ENCODE measurements at regions of chr5 and their contacts with region 1.

Region 1: DNA sequence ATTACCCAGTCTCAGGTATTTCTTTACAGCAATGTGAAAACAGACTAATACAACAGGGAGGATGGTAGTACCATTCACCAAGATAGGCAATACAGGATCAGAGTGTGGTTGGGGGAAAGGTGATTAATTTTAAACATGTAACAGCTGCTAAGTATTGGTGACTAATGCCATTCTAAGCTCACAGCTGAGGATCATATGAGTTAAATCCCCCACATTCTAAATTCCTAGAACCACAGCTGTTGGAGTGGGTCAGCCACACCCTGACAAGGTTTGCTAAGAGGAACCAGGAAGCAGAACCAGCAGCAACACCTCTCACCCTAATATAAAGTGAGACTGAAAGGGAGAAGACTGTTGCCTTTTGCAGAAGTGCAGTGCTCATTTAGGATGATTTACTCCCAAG is 24.8 kb downstream of the HSPB3 start:
- DNase-seq: no peak

Region 2: DNA sequence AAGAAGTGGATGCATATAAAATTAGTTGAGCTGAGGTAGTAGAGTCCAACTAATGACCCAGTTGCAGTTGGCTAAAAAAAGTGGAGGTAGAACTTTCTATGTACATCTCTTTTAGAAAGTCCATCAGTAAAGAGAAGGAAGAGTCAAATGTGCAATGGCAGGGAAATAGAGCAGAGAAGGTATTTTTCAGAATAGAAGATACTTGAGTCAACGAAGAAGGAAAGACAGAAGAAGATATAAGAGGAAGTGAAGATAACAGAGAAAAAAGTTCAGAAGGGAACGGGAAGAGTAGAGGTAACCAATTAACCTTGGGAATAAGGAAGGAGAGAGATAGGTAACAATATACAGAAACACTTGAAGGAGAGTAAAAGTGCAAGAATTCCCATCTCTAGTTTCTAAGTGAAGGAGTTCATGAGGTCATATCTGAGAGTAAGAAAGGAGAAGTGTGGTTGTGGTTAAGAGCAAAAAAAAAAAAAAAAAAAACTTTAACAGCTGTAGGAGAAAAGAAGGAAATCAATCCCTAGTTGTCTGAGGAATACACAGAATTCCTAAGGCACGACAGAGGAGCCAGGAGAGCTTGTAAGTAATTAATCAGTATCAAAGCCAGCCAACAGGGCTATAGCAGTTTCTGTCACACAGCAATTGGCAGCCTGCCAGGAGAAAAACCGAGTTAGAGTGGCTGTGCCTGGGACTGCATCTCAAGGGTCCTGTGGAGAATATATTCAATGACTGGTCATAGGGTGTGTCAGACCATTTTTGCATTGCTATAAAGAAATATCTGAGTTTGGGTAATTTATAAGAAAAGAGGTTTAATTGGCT is 230.9 kb before region 1 on chr5:
- intact Hi-C with region 1: loop called (anchors 5 kb)
- DNase-seq: no peak

Region 3: DNA sequence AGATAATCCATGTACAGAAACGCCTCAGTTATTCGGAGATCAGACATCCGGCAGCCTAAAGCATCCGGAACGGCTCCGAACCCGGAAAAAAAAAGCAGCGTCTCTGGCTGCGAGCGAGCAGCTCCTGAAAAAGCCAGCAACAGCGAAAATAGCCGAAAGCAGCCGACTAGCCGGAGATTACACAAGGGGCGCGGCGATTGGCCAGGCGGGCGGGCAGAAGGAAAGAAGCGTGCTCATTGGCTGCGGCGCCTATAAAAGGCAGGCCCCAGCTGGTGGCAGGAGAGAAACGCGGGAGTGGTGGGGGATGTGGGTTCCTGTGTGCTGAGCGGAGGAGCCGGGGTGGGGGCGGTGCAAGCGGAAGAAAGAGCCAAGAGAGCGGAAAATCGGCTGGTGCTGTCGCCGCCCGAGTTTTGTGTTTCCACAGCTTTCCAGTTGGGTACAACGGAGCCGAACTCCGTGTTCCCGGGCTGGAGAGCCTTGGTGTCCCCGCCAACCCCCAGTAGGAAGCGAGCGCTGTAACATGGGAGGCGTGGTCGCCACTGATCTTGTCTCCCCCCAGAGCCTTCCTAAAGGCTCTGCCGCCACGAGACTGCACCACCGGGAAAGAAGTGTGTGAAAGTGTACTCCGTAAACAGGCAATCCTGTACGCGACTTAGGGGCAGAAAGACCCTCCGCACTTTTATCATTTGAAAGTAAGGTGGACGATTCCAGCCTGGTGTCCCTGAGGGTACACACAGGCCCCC is 169.7 kb before region 1 on chr5 and contains the start of gene ARL15:
- intact Hi-C with region 1: loop called (anchors 5 kb)
- DNase-seq: peak; percentile 100
- total RNA-seq, gene ARL15: 21.3 TPM

Region 4: GRCh38 chr5:54446379-54446732 is 33.9 kb before region 1 on chr5:
- intact Hi-C with region 1: loop called (anchors 5 kb)
- DNase-seq: no peak